ENCODE measurements at regions of chr3 and their contacts with region 1.

Region 1: DNA sequence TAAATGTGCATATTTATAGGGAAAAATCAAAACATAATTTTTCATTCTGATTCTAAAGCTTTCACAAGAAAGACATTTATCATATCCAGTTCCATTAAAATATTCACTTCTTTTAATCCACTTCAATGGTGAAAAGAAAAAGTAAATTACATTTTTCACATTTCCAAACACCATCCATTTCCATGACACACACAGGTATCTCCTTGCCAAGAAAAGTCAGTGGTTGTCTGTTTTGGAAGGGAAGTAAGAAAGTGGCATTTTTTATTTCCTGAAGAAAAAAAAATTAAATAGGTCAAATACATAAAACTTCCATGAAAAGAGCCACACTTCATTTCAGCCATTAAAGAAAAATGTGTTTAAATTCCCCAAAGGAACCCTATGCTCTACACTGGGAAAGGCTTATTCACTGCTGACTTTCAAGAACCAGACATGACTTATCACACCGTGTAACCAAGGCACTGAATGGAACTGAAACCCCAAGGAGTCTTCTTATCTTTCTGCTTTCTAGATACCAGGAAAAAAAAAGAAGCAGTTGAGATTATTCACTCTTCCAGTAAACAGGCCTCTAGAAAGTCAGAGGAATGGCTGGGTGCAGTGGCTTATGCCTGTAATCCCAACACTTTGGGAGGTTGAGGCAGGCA is 44.5 kb downstream of the OSBPL10 start:
- DNase-seq: no peak
- ATAC-seq: no peak

Region 2: GRCh38 chr3:31262211-31262610 is 674.3 kb before region 1 on chr3:
- intact Hi-C with region 1: loop called (anchors 5 kb)
- DNase-seq: no peak
- ATAC-seq: no peak

Region 3: DNA sequence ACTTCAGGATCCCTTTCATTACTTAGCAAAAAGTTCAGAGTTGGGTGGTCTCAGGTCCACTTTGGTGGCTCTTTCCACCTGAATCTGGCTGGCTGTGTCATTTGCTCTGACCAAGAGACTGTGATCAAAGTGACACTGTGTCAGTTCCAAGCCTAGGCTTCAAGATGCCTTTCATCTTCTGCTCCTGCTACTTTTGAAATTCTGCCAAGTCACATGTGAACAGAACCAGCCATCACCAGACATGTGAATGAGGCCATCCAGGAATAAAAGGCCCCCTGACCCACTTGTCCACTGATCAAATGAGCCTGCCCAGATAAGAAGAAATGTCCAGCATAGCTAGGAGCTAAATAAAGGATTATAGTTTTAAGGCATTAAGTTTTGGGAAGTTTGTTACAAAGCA is 87.6 kb before region 1 on chr3:
- intact Hi-C with region 1: no loop called
- DNase-seq: no peak
- ATAC-seq: no peak

Measured in sciatic nerve (tissue), 2 donors.